ENCODE measurements at regions of chr17 and their contacts with region 1.

Region 1: GRCh38 chr17:80364216-80364618 is 50.8 kb upstream of the ENDOV start:
- DNase-seq: peak in 1 of 2 donors; percentile 53
- ATAC-seq: peak in 3 of 4 donors; percentile 25 to 52 (median 45)
- H3K4me3 ChIP-seq: no peak overlapping the region
- H3K27ac ChIP-seq: no peak overlapping the region
- H3K4me1 ChIP-seq: no peaks in the 10 kb centered on the region
- H3K27me3 ChIP-seq: no peaks in the 10 kb centered on the region
- CTCF ChIP-seq: peak; percentile 34

Region 2: DNA sequence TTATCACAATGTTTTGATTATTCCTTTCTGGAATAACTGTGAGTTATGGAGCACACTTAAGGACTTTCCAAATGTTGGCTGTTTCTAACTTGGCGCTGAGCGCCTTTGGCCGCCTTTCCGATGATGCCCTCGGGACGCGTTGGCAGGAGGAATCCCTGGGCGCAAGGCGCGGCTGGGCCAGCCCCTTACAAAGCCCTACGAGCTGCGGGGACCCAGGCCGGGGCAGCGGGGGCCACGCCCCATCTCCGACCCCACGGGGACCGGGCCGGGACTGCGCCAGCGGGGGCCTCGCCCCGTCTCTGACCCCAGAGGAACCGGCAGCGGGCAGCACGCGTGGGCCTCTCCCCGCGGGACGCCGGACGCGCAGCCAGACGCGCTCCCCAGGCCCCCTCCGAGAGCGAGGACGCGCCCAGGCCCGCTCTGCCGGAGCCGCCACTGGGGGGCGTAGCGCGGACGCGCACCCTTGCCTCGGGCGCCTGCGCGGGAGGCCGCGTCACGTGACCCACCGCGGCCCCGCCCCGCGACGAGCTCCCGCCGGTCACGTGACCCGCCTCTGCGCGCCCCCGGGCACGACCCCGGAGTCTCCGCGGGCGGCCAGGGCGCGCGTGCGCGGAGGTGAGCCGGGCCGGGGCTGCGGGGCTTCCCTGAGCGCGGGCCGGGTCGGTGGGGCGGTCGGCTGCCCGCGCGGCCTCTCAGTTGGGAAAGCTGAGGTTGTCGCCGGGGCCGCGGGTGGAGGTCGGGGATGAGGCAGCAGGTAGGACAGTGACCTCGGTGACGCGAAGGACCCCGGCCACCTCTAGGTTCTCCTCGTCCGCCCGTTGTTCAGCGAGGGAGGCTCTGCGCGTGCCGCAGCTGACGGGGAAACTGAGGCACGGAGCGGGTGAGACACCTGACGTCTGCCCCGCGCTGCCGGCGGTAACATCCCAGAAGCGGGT is 262.9 kb before region 1 on chr17 and contains the start of gene GAA:
- intact Hi-C with region 1: loop called in 1 of 2 experiments (anchors 10 kb)
- DNase-seq: peak; percentile 88 to 94
- ATAC-seq: peak; percentile 91 to 95 (median 93)
- H3K4me3 ChIP-seq: peak within 1 kb of the TSS; percentile 97
- H3K27ac ChIP-seq: peak within 1 kb of the TSS; percentile 86
- H3K4me1 ChIP-seq: peaks cover 13% of the 10 kb centered on the region
- H3K27me3 ChIP-seq: no peaks in the 10 kb centered on the region
- CTCF ChIP-seq: peak; percentile 83
- total RNA-seq, gene GAA: 27.3 to 42.4 (median 34.3) TPM

Region 3: DNA sequence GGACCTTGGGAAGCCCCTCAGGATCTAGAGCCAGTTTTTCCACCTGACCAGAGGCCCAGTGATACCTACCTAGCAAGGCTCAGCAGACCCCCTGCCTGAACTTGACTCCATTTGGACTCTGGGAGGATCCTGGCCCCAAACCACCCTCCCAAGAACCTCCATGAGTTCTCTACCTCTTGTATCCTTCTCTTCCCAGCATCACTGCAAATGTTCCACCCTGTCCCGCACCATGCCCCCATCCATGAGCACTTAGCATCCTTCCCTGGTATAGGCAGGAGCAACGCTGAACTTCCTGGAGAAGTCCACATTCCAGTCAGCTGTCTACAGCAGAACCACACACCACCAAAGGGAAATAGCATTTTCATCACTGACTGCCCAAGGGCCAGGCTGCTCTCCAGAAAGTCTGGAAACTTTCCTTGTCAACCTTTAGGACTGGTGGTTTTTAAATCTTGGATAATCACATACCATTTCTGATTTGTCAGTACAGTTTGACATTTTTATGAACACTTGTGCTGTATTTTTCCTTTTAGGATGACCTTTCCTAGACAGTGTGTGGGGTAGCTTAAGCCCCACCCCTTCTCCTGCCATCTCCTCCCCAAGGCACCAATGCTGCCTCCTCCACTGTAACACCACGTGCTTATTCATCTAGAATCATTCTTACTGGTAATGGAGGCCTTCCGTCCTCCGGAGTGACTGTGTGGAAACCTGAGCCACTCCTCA is 231.2 kb before region 1 on chr17:
- intact Hi-C with region 1: loop called in 1 of 2 experiments (anchors 10 kb)
- DNase-seq: no peak
- ATAC-seq: no peak
- H3K4me3 ChIP-seq: no peak overlapping the region
- H3K27ac ChIP-seq: no peak overlapping the region
- H3K4me1 ChIP-seq: no peaks in the 10 kb centered on the region
- H3K27me3 ChIP-seq: no peaks in the 10 kb centered on the region
- CTCF ChIP-seq: no peak

Region 4: DNA sequence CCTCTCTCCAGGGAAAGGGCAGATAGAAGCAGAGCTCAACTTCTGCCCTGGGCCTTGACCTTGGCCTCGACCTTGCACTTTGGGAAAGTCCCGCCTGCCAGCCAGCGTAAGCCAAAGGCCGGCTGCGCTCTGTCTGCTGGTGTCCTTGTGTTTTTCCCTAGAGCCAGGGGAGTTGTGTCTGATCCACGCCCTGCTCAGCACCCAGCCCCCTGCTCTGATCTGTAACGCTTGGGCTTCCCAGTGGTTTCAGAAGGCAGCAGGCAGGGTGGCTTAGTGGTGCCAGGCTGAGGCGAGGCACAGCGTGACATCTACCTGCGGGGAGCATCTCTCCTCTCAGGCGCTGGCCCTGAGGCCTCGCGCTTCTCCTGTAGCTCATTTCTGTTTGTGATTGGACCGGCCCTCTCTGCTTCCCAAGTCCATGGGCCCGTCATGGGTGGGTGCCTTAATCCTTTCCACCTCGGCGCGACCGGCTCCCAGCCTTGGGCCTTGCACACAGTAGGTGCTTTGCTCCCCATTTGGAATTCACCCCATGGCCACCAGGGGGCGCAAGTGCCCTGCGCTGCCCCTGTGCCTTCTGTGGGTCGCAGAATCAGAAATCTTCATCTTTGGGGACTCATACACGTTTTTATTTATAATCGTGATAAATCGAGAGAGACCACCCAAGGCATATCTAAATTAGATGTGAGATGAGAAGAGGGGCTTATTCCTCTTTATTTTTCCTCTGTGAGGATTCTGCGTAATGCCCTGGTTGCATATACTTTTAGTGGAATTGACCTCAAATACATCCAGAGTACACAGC is 168.3 kb before region 1 on chr17:
- intact Hi-C with region 1: loop called in 1 of 2 experiments (anchors 10 kb)
- DNase-seq: peak in 1 of 2 donors; percentile 39
- ATAC-seq: peak in 1 of 4 donors; percentile 55
- H3K4me3 ChIP-seq: no peak overlapping the region
- H3K27ac ChIP-seq: no peak overlapping the region
- H3K4me1 ChIP-seq: peaks cover 5% of the 10 kb centered on the region
- H3K27me3 ChIP-seq: peaks cover 0 to 9% (median 2%) of the 10 kb centered on the region in 3 donors
- CTCF ChIP-seq: peak; percentile 92

Region 5: GRCh38 chr17:80331820-80332219 is 32.4 kb before region 1 on chr17:
- intact Hi-C with region 1: loop called in 1 of 2 experiments (anchors 5 kb)
- DNase-seq: no peak
- ATAC-seq: no peak
- H3K4me3 ChIP-seq: no peak overlapping the region
- H3K27ac ChIP-seq: no peak overlapping the region
- H3K4me1 ChIP-seq: no peaks in the 10 kb centered on the region
- H3K27me3 ChIP-seq: no peaks in the 10 kb centered on the region
- CTCF ChIP-seq: no peak

Measured in psoas muscle (tissue), 8 donors.